ENCODE measurements at regions of chr19 and their contacts with region 1.

Region 1: GRCh38 chr19:3075895-3076431 is 13.7 kb upstream of the TLE5 start:
- DNase-seq: peak; percentile 61 to 78
- H3K4me3 ChIP-seq: peak overlapping the region; percentile 28
- H3K4me3 Mint-ChIP-seq: peak overlapping the region; percentile 50
- H3K27ac Mint-ChIP-seq: peak overlapping the region; percentile 20
- H3K4me1 ChIP-seq: no peaks in the 10 kb centered on the region
- H3K4me1 Mint-ChIP-seq: peaks cover 6% of the 10 kb centered on the region
- H3K27me3 ChIP-seq: no peaks in the 10 kb centered on the region
- H3K27me3 Mint-ChIP-seq: no peaks in the 10 kb centered on the region
- CTCF ChIP-seq: peak; percentile 88

Region 2: GRCh38 chr19:3108775-3109174 is 32.8 kb after region 1 on chr19:
- CTCF ChIA-PET with region 1: interaction called, 11 read pairs
- POLR2A ChIA-PET with region 1: no interaction called
- intact Hi-C with region 1: loop called (anchors 1 kb)
- DNase-seq: peak; percentile 66 to 70
- H3K4me3 ChIP-seq: no peak overlapping the region
- H3K4me3 Mint-ChIP-seq: no peak overlapping the region
- H3K27ac Mint-ChIP-seq: peak overlapping the region; percentile 55
- H3K4me1 ChIP-seq: no peaks in the 10 kb centered on the region; the same call in 1 of the 2 replicates
- H3K4me1 Mint-ChIP-seq: no peaks in the 10 kb centered on the region
- H3K27me3 ChIP-seq: no peaks in the 10 kb centered on the region
- H3K27me3 Mint-ChIP-seq: no peaks in the 10 kb centered on the region
- CTCF ChIP-seq: peak; percentile 72 to 74

Region 3: DNA sequence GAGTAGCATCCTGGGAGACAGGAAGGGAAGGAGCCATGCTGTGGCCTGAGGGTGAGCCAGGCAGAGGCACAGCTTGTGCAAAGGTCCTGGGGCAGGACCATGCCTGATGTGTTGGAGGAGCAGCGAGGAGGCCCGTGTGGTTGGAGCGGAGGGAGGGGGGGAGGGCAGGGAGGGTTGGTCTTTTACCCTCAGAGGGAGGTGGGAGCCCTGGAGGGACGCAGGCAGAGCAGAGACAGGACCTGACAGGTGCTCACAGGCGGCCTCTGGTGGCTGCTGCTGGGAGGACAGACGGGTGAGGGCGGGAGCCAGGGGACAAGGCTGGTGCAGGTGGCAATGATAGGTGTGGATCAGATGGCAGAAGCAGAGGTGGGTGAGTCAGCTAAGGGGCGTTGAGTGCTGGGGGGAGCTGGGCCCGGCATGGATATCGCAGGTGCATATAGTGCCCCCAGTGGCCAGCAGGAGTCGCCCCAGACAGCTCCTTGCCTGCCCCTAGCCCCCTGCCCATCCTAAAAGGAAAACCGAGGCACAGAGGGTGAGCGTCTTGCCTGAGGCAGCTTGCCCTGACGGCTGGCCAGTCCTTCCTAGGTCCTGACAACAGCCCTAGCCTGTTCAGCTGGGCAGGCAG is 50.0 kb after region 1 on chr19:
- CTCF ChIA-PET with region 1: no interaction called
- POLR2A ChIA-PET with region 1: no interaction called
- intact Hi-C with region 1: loop called (anchors 2 kb)
- DNase-seq: peak; percentile 66 to 73
- H3K4me3 ChIP-seq: no peak overlapping the region
- H3K4me3 Mint-ChIP-seq: no peak overlapping the region
- H3K27ac Mint-ChIP-seq: no peak overlapping the region
- H3K4me1 ChIP-seq: no peaks in the 10 kb centered on the region
- H3K4me1 Mint-ChIP-seq: no peaks in the 10 kb centered on the region
- H3K27me3 ChIP-seq: no peaks in the 10 kb centered on the region
- H3K27me3 Mint-ChIP-seq: no peaks in the 10 kb centered on the region
- CTCF ChIP-seq: peak; percentile 65 to 75

Region 4: GRCh38 chr19:3135961-3136683 is 60.2 kb after region 1 on chr19 and contains the start of gene GNA15:
- CTCF ChIA-PET with region 1: no interaction called
- POLR2A ChIA-PET with region 1: no interaction called
- intact Hi-C with region 1: no loop called
- DNase-seq: no peak
- H3K4me3 ChIP-seq: no peak within 1 kb of the TSS
- H3K4me3 Mint-ChIP-seq: no peak within 1 kb of the TSS
- H3K27ac Mint-ChIP-seq: no peak within 1 kb of the TSS
- H3K4me1 ChIP-seq: no peaks in the 10 kb centered on the region
- H3K4me1 Mint-ChIP-seq: no peaks in the 10 kb centered on the region
- H3K27me3 ChIP-seq: no peaks in the 10 kb centered on the region
- H3K27me3 Mint-ChIP-seq: no peaks in the 10 kb centered on the region
- CTCF ChIP-seq: no peak
- total RNA-seq, gene GNA15: not detected in 2 replicates

Region 5: GRCh38 chr19:3295581-3295980 is 219.6 kb after region 1 on chr19:
- CTCF ChIA-PET with region 1: no interaction called
- POLR2A ChIA-PET with region 1: interaction called, 13 read pairs
- intact Hi-C with region 1: no loop called
- DNase-seq: no peak
- H3K4me3 ChIP-seq: no peak overlapping the region
- H3K4me3 Mint-ChIP-seq: no peak overlapping the region
- H3K27ac Mint-ChIP-seq: no peak overlapping the region
- H3K4me1 ChIP-seq: no peaks in the 10 kb centered on the region
- H3K4me1 Mint-ChIP-seq: no peaks in the 10 kb centered on the region
- H3K27me3 ChIP-seq: no peaks in the 10 kb centered on the region
- H3K27me3 Mint-ChIP-seq: peaks cover 4% of the 10 kb centered on the region
- CTCF ChIP-seq: no peak